Head of caudate nucleus (tissue), 42 donors: ENCODE measurements at regions of chr9 and their contacts with region 1.

Region 1: DNA sequence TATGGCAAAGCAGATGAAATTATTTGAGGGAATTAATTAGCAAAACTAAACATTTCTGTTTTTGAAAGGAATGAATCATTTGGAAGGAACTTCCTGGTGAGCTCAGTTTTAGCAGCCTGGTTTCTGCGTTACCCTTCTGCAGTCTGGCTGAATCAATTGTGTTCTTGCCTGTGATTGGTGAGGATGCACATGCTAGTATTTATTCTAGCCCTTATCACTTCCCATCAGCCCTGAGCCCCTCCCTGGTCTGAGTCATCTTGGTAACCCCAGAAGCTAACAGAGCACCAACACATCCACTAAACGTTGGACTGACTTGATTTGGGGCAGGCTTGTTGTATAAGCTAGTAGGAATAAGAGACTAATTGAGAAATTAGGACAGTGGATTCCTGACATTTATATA is 6.6 kb downstream of the TJP2 start:
- DNase-seq: peak in 5 of 42 donors; percentile 38 to 65 (median 44)

Region 2: DNA sequence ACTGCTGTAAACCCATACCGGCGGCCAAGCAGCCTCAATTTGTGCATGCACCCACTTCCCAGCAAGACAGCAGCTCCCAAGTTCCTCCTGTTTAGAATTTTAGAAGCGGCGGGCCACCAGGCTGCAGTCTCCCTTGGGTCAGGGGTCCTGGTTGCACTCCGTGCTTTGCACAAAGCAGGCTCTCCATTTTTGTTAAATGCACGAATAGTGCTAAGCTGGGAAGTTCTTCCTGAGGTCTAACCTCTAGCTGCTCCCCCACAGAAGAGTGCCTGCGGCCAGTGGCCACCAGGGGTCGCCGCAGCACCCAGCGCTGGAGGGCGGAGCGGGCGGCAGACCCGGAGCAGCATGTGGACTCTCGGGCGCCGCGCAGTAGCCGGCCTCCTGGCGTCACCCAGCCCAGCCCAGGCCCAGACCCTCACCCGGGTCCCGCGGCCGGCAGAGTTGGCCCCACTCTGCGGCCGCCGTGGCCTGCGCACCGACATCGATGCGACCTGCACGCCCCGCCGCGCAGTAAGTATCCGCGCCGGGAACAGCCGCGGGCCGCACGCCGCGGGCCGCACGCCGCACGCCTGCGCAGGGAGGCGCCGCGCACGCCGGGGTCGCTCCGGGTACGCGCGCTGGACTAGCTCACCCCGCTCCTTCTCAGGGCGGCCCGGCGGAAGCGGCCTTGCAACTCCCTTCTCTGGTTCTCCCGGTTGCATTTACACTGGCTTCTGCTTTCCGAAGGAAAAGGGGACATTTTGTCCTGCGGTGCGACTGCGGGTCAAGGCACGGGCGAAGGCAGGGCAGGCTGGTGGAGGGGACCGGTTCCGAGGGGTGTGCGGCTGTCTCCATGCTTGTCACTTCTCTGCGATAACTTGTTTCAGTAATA is 145.0 kb before region 1 on chr9 and contains the start of gene FXN:
- intact Hi-C with region 1: loop called (anchors 5 kb)
- DNase-seq: peak; percentile 50 to 91 (median 84)